ENCODE measurements at regions of chr4 and their contacts with region 1.

Region 1: DNA sequence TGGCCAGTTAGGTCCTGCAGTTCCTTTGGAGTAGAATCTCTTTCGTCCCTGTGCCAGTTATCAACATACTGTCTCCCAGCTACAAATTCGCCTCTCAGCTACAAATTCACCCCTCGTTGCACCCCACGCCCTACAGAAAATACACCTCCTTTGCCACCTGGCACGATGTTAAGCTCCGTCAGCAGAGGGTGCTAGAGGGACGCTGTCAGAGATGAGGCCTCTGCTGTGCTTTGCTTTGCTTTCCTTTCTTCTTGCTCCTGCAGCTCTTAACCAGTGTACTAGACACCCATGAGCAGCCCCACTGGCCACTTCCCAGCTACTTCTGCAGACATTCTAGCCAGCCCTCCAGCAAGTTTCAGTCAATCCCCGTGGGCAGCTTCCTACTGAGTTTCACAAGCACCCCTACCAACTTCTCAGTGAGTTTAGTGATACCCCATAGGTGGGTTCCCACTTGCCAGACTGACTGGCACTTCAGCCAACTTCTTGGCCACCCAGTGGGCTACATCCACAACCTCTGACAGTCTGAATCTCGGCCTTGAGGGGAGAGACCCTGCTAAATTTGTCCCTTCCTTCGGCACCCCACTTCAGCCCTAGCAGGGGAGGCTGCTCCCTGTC is 21.8 kb downstream of the HAUS3 start:
- DNase-seq: peak; percentile 80

Region 2: DNA sequence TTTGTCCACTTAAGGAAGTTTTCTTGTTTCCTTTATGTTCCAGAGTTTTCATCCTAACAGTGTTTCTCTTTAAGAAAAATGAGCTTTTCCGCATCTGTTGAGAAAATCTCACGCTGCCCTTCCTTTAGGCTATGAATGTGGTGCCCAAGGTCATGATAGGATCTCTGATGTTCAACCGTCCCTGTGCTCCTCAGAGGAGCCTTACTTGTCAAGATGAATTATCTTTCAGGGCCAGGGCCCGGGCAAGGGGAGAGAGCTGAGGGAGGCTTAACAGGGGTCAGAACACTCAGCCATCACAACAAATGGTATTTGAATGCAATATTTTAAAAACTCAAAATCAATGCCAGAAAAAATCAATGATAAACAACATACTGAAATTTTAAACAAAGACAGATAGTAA is 205.1 kb before region 1 on chr4:
- intact Hi-C with region 1: no loop called
- DNase-seq: no peak

Region 3: GRCh38 chr4:2186133-2186864 is 33.8 kb before region 1 on chr4:
- intact Hi-C with region 1: no loop called
- DNase-seq: no peak

Region 4: GRCh38 chr4:2441393-2442174 is 221.5 kb after region 1 on chr4:
- intact Hi-C with region 1: loop called (anchors 5 kb)
- DNase-seq: no peak

Region 5: GRCh38 chr4:2451821-2452785 is 232.0 kb after region 1 on chr4:
- intact Hi-C with region 1: no loop called
- DNase-seq: no peak

Region 6: GRCh38 chr4:2462218-2462991 is 242.3 kb after region 1 on chr4:
- intact Hi-C with region 1: loop called (anchors 1 kb)
- DNase-seq: peak; percentile 82

Region 7: GRCh38 chr4:2624782-2625530 is 404.8 kb after region 1 on chr4:
- intact Hi-C with region 1: loop called (anchors 5 kb)
- DNase-seq: peak; percentile 70

Measured in cardiac septum (tissue), 1 donor.